Endothelial cell of umbilical vein (primary cell): ENCODE measurements at regions of chr4 and their contacts with region 1.

Region 1: GRCh38 chr4:124432500-124432899 is 280.0 kb downstream of the ANKRD50 start:
- DNase-seq: peak; percentile 94
- H3K4me3 ChIP-seq: peak overlapping the region in 1 of 3 experiments; percentile 24
- H3K27ac ChIP-seq: peak overlapping the region; percentile 100
- H3K4me1 ChIP-seq: peaks cover 75% of the 10 kb centered on the region
- H3K27me3 ChIP-seq: no peaks in the 10 kb centered on the region
- CTCF ChIP-seq: no peak
- POLR2A ChIP-seq: no peak

Region 2: DNA sequence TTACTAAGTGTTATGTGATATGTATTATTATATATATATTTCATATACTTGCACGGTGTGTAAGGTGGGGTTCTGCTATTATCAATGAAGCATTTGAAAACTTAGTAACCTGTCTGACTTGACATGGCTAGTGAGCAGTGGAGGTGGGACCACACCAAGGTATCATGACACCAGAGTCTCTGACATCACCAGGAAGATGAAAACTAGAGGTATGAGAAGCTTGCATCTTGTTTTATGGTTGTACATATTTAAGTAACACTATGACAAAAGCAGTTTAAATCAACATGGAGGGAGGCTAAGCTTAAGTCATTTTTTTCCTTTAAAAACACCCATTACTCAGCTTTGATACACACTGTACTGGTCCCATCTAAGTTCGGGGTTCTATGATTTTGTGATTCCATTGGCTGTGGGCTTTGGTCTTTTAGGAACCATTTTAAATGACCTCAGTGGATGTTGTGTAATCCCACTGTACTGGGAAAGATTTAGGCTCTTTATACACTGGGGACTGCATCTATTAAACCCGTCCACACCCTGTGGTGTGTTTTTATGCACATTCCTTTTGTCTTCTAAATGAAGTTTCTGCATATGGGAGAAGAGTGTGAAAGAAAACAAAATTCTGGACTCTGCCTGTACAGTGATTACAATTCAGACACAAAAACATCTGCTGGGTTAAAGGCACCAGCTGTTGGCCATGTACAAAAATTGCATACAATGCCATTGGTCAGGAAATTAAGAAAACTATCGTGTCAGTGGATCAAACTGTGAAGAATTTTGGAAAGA is 465.3 kb before region 1 on chr4:
- CTCF ChIA-PET with region 1: no interaction called
- POLR2A ChIA-PET with region 1: no interaction called
- dilution Hi-C with region 1: no loop called
- intact Hi-C with region 1: no loop called
- DNase-seq: no peak
- H3K4me3 ChIP-seq: no peak overlapping the region
- H3K27ac ChIP-seq: no peak overlapping the region
- H3K4me1 ChIP-seq: no peaks in the 10 kb centered on the region
- H3K27me3 ChIP-seq: no peaks in the 10 kb centered on the region
- CTCF ChIP-seq: no peak
- POLR2A ChIP-seq: no peak

Region 3: DNA sequence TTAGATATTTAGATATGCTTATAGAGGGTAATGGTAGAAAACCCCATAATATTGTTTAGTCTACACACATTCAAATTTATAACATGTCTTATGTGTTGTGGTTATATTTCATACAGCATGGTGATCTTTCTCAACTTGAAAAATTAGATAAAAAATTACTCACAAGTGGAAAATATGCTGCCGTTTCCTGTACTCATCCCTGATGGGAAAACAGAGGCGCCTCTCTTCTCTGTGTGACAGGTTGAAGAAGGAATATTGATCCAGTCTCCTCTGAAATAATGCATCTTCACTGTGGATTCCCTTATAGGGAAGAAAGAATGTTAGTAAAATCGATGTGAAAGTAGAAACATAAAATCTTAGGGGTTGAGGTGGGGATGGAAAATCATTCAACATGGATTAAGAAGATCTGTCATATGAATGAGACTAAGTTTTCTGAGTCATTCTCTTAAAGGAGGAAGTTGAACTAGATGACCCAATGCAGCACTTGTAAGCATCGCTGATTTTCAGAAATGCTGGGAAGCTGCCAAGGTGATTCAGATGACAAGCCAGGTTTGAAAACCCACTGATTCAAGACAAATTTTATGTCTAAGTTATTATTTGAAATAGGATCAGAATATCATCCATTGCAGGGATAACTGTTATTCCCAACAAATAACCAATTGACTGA is 209.3 kb after region 1 on chr4:
- CTCF ChIA-PET with region 1: interaction called, 4 read pairs
- POLR2A ChIA-PET with region 1: no interaction called
- dilution Hi-C with region 1: no loop called
- intact Hi-C with region 1: loop called (anchors 1 kb)
- DNase-seq: peak; percentile 86
- H3K4me3 ChIP-seq: peak overlapping the region in 1 of 3 experiments; percentile 12
- H3K27ac ChIP-seq: peak overlapping the region; percentile 79
- H3K4me1 ChIP-seq: peaks cover 43% of the 10 kb centered on the region
- H3K27me3 ChIP-seq: no peaks in the 10 kb centered on the region
- CTCF ChIP-seq: no peak
- POLR2A ChIP-seq: no peak